Left ventricle myocardium superior (tissue), 1 donor: ENCODE measurements at regions of chr7 and their contacts with region 1.

Region 1: DNA sequence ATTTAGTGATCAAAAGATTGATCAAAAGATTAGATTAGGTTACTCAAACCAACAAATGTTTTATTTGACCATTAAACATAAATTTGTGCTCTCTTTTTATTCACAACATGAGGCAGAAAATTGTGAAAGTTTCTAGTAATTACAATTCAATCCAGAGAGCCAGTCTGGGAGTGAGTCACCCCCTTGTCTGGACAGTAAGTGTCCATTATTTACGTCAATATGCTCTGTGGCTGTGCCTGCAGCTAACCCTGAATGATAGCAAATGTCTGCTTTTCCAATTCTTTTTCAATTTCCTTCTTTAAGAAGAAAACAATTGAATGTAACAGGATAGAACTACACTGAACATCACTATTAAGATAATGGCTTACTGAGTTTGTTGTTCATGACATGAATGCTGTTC is 27.9 kb downstream of the GNG11 start:
- DNase-seq: no peak
- ATAC-seq: no peak

Region 2: DNA sequence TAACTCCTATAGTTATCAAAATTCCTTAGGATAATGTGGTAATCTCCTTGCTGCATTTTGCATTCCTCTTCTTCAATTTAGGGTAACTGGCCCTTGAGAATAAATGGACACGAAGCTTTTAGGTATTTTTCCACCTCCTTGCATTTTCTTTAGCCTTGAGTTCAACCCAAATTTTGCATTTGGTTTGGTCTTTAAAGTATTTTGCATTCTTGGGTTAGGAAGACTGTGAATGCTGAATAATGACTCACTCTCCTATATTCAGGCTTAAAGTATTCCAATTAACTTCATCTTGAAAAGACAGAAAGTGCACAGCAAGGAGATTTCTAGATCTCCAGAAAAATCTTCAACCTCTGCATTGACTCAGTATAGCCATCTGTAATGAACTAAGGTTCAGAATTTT is 106.2 kb before region 1 on chr7:
- intact Hi-C with region 1: no loop called
- DNase-seq: no peak
- ATAC-seq: no peak

Region 3: DNA sequence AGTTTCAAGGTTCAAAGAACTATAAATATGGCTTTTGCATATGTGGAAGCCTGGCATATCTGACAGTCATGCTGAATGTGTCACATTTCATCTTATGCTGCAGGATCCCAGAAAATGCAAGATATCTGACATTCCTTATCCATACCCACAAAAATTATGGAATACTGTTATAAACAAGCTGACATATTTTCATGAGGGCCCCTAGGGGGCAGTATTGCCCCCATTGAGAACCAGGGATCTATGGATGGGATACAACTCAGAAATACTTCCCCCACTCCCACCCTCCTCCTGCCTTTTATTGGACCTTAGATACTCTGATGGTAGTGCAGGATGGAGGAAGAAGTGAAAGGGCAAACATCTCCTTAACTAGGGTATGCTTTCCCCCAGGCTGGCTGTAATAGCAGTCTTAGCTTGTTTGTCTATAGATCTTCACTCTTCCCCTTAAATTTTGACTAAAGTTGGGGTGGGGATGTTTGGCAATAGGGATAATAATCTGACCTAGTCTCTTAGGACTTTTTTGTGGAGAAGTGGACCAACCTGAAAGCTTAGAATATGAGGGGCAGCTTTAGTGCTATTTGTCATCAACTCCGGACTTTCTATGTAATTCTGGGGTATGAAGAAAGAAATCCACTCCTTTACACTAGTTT is 46.6 kb before region 1 on chr7:
- intact Hi-C with region 1: no loop called
- DNase-seq: no peak
- ATAC-seq: peak; percentile 68

Region 4: GRCh38 chr7:93992423-93993110 is 43.1 kb after region 1 on chr7:
- intact Hi-C with region 1: loop called (anchors 10 kb)
- DNase-seq: no peak
- ATAC-seq: no peak

Region 5: GRCh38 chr7:94087664-94088352 is 138.3 kb after region 1 on chr7:
- intact Hi-C with region 1: no loop called
- DNase-seq: no peak
- ATAC-seq: peak; percentile 84